Activated B cell treated with CpG ODN at 0.5 μM for 24 hours (primary cell): ENCODE measurements at regions of chr6 and their contacts with region 1.

Region 1: GRCh38 chr6:34332251-34333198 is 59.9 kb downstream of the NUDT3 start:
- DNase-seq: no peak
- ATAC-seq: peak; percentile 64
- H3K4me3 Mint-ChIP-seq: peak overlapping the region; percentile 46
- H3K27ac Mint-ChIP-seq: peak overlapping the region; percentile 81
- H3K4me1 Mint-ChIP-seq: peaks cover 47% of the 10 kb centered on the region
- H3K27me3 Mint-ChIP-seq: no peaks in the 10 kb centered on the region
- CTCF ChIP-seq: no peak

Region 2: DNA sequence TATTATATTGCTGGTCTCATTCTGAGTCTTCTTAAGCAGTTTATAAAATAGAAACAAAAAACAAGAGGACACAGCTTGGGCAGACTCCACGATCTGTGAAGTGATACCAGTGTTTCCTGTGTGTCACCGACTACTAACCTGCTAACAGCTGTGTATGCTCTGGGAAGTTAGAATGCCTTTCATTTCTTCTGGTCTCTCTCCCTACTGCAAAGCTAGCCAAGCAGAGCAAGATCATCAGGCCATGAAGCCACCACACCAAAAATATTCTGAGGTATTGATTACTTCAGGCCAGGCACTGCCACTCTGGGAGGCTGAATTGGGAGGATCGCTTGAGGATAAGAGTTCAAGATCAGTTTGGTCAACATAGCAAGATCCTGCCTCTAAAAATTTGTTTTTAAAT is 36.8 kb before region 1 on chr6:
- CTCF ChIA-PET with region 1: no interaction called
- POLR2A ChIA-PET with region 1: no interaction called
- intact Hi-C with region 1: loop called (anchors 5 kb)
- DNase-seq: no peak
- ATAC-seq: peak; percentile 90
- H3K4me3 Mint-ChIP-seq: peak overlapping the region; percentile 52
- H3K27ac Mint-ChIP-seq: peak overlapping the region; percentile 94
- H3K4me1 Mint-ChIP-seq: peaks cover 66% of the 10 kb centered on the region
- H3K27me3 Mint-ChIP-seq: no peaks in the 10 kb centered on the region
- CTCF ChIP-seq: no peak

Region 3: DNA sequence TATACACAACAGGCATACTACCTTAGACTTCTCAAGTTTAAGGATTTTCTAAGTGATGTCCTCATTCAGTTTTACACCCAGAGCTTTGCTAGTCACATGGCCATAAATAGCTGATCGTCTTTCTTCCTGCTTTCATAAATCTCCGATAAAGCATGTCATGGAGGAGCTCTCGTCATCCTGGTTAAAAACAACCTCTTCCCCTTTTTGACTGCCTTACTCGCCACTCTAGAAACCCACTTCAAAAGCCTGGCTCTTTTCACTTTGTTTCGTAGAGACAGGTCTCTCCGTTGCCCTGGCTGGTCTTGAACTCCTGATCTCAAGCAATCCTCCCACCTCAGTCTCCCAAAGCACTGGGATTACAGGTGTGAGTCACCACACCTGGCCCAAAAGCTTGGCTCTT is 16.7 kb before region 1 on chr6:
- CTCF ChIA-PET with region 1: no interaction called
- POLR2A ChIA-PET with region 1: interaction called, 3 read pairs
- intact Hi-C with region 1: loop called (anchors 2 kb)
- DNase-seq: no peak
- ATAC-seq: peak; percentile 79
- H3K4me3 Mint-ChIP-seq: peak overlapping the region; percentile 77
- H3K27ac Mint-ChIP-seq: peak overlapping the region; percentile 94
- H3K4me1 Mint-ChIP-seq: peaks cover 69% of the 10 kb centered on the region
- H3K27me3 Mint-ChIP-seq: no peaks in the 10 kb centered on the region
- CTCF ChIP-seq: no peak

Region 4: GRCh38 chr6:34350137-34350933 is 17.8 kb after region 1 on chr6:
- CTCF ChIA-PET with region 1: no interaction called
- POLR2A ChIA-PET with region 1: interaction called, 3 read pairs
- intact Hi-C with region 1: loop called (anchors 2 kb)
- DNase-seq: no peak
- ATAC-seq: no peak
- H3K4me3 Mint-ChIP-seq: no peak overlapping the region
- H3K27ac Mint-ChIP-seq: no peak overlapping the region
- H3K4me1 Mint-ChIP-seq: peaks cover 48% of the 10 kb centered on the region
- H3K27me3 Mint-ChIP-seq: no peaks in the 10 kb centered on the region
- CTCF ChIP-seq: no peak

Region 5: DNA sequence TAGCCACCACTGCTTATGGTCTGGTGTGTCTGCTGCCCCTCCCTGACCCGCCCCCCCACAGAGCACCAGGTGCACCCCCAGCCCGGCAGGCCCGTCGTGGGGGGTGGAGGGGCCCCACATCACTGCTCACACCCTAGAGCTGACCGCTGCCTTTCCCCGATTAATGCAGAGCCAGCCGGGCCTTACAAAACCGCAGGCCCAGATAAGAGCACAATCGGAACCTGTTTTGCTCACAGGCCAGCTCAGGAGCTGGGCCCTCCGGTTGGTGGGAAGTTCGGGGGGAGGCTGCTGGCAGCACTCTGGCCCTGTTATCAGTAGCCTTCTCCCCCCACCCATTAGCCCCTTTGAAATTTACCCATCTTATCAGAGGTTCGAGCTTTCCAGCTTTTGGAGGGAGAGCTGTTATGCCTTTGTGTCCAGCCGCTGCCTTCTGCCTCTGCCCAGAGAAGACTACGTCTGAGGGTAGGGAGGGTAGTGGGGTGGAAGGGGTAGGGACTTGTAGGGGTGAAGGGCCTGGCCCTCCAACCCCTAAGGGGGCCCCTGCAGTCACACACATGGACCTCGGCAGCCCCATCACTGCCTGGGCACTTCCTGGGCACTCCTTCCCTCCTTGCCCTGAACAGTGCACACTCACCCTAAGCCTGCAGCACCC is 230.5 kb after region 1 on chr6:
- CTCF ChIA-PET with region 1: no interaction called
- POLR2A ChIA-PET with region 1: no interaction called
- intact Hi-C with region 1: no loop called
- DNase-seq: no peak
- ATAC-seq: no peak
- H3K4me3 Mint-ChIP-seq: no peak overlapping the region
- H3K27ac Mint-ChIP-seq: no peak overlapping the region
- H3K4me1 Mint-ChIP-seq: no peaks in the 10 kb centered on the region
- H3K27me3 Mint-ChIP-seq: peaks cover 2% of the 10 kb centered on the region
- CTCF ChIP-seq: no peak

Region 6: GRCh38 chr6:34575326-34575725 is 242.8 kb after region 1 on chr6:
- CTCF ChIA-PET with region 1: no interaction called
- POLR2A ChIA-PET with region 1: no interaction called
- intact Hi-C with region 1: no loop called
- DNase-seq: no peak
- ATAC-seq: no peak
- H3K4me3 Mint-ChIP-seq: no peak overlapping the region
- H3K27ac Mint-ChIP-seq: no peak overlapping the region
- H3K4me1 Mint-ChIP-seq: no peaks in the 10 kb centered on the region
- H3K27me3 Mint-ChIP-seq: no peaks in the 10 kb centered on the region
- CTCF ChIP-seq: no peak